CD4-positive, alpha-beta memory T cell (primary cell): ENCODE measurements at regions of chr15 and their contacts with region 1.

Region 1: DNA sequence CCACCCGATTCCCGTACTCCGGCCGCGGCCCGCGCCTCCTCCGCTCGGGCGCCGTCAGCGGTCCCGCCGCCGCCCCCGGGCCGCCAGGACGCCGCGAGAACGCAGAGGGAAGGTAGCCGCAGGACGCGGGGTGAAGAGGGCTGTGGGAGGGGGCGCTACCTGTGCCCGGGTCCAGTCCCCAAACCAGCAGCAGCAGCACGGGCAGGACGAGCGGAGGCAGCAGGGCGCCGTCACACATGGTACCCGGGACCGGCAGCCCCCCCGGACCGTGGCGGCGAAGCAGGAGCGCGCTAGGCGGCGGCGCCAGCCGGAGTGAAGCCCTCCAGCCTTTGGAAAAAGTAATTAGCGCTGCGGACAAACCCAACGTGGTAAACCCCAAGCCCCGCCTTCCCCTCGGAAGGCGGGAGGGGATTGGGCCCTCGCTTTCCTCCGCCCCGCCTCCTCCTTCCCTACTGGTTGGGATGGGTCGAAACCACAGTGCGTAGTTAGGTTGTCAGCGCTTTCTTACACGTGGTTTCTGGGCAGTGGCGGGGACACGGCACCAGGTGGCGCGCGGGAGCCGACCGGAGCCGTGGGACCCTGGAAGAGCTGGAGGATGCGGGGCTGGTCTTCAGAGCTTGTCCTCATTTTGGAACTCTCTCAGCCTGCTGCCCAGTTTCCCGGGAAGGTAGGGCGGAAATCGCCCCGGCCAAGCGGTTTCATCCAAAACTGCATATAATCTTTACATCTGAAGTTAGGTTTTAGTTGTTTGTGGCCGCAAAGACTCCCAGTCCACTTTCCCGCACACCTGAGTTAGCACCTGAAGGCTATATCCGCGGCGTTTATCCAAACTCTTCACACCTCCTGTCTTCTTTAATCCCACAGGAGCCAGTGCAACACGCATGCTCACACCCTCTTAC is at the start of gene ADAMTS17:
- DNase-seq: peak; percentile 94 to 97 (median 95)
- H3K4me3 ChIP-seq: peak within 1 kb of the TSS in 1 of 2 donors; percentile 79
- H3K4me3 Mint-ChIP-seq: peak within 1 kb of the TSS; percentile 57 to 86 (median 75)
- H3K27ac ChIP-seq: peak within 1 kb of the TSS; percentile 43
- H3K27ac Mint-ChIP-seq: peak within 1 kb of the TSS; percentile 29 to 87 (median 77)
- H3K4me1 ChIP-seq: peaks cover 22% of the 10 kb centered on the region
- H3K4me1 Mint-ChIP-seq: peaks cover 13 to 34% (median 15%) of the 10 kb centered on the region in 4 donors
- H3K27me3 ChIP-seq: no peaks in the 10 kb centered on the region
- H3K27me3 Mint-ChIP-seq: no peaks in the 10 kb centered on the region
- total RNA-seq, gene ADAMTS17: 4.7 to 6.2 TPM

Region 2: DNA sequence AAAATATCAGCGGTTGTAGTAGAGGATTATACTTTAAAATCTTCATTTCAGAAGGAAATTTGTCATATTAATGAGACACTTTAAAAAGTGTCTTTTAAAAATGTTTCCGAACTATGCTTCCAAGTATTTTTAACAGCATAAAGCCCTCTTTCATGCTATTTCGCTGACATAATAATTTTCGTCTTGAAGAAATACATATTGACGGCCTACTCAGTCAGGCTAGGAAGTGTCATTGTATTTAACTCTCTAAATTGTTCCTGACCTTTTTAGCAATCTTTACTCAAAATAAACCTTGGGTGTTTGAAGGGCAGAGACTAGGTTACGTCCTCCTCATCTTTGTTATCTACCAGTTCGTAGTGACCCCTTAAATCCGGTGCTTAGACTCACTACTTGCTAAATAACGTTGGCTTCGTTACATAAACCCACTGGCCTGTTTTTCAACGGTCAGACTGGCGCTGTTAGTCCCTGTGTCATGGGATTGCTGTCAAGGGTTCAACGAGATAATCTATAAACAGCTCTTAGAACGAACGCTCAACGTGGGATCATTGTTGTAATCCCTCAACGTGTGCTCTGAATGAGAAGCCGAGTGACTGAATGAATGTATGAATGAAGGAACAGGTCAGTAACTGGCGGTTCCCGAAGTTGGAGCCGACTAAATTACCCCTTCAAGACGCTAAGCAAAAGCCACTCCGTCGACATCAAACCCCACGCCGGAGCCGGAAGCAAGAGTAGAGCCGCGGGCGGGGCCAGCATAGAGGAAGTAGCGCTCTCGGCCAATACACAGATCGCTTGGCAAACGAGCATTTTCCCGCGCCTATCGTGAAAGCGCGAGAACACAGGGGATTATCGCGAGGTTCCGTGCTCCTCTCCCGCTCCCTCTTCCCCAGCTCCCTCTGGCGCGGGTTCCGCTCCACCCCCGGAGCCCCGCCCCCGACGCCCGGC is 1091.1 kb before region 1 on chr15:
- CTCF ChIA-PET with region 1: no interaction called
- POLR2A ChIA-PET with region 1: no interaction called
- intact Hi-C with region 1: loop called (anchors 1 kb)
- DNase-seq: peak; percentile 90 to 95 (median 93)
- H3K4me3 ChIP-seq: peak overlapping the region; percentile 47 to 73
- H3K4me3 Mint-ChIP-seq: peak overlapping the region; percentile 84 to 96 (median 92)
- H3K27ac ChIP-seq: peak overlapping the region; percentile 60
- H3K27ac Mint-ChIP-seq: peak overlapping the region; percentile 70 to 95 (median 90)
- H3K4me1 ChIP-seq: peaks cover 31% of the 10 kb centered on the region
- H3K4me1 Mint-ChIP-seq: peaks cover 17 to 33% (median 29%) of the 10 kb centered on the region in 4 donors
- H3K27me3 ChIP-seq: no peaks in the 10 kb centered on the region
- H3K27me3 Mint-ChIP-seq: no peaks in the 10 kb centered on the region

Region 3: GRCh38 chr15:99565299-99566156 is 776.4 kb before region 1 on chr15 and contains the start of gene MEF2A:
- CTCF ChIA-PET with region 1: no interaction called
- POLR2A ChIA-PET with region 1: no interaction called
- intact Hi-C with region 1: loop called (anchors 5 kb)
- DNase-seq: peak; percentile 92 to 94 (median 92)
- H3K4me3 ChIP-seq: peak within 1 kb of the TSS; percentile 63 to 99
- H3K4me3 Mint-ChIP-seq: peak within 1 kb of the TSS; percentile 95 to 100 (median 98)
- H3K27ac ChIP-seq: peak within 1 kb of the TSS; percentile 85
- H3K27ac Mint-ChIP-seq: peak within 1 kb of the TSS; percentile 95 to 99 (median 97)
- H3K4me1 ChIP-seq: peaks cover 29% of the 10 kb centered on the region
- H3K4me1 Mint-ChIP-seq: peaks cover 28 to 45% (median 36%) of the 10 kb centered on the region in 4 donors
- H3K27me3 ChIP-seq: no peaks in the 10 kb centered on the region
- H3K27me3 Mint-ChIP-seq: peaks cover 0 to 3% of the 10 kb centered on the region in 2 donors
- total RNA-seq, gene MEF2A: 27.6 to 27.8 TPM

Region 4: GRCh38 chr15:99961011-99961441 is 380.9 kb before region 1 on chr15:
- CTCF ChIA-PET with region 1: interaction called, 11 read pairs
- POLR2A ChIA-PET with region 1: no interaction called
- intact Hi-C with region 1: no loop called
- DNase-seq: no peak
- H3K4me3 ChIP-seq: no peak overlapping the region
- H3K4me3 Mint-ChIP-seq: no peak overlapping the region
- H3K27ac ChIP-seq: no peak overlapping the region
- H3K27ac Mint-ChIP-seq: no peak overlapping the region
- H3K4me1 ChIP-seq: peaks cover 5% of the 10 kb centered on the region
- H3K4me1 Mint-ChIP-seq: peaks cover 6 to 7% (median 6%) of the 10 kb centered on the region in 4 donors
- H3K27me3 ChIP-seq: no peaks in the 10 kb centered on the region
- H3K27me3 Mint-ChIP-seq: peaks cover 4 to 18% of the 10 kb centered on the region in 2 donors

Region 5: DNA sequence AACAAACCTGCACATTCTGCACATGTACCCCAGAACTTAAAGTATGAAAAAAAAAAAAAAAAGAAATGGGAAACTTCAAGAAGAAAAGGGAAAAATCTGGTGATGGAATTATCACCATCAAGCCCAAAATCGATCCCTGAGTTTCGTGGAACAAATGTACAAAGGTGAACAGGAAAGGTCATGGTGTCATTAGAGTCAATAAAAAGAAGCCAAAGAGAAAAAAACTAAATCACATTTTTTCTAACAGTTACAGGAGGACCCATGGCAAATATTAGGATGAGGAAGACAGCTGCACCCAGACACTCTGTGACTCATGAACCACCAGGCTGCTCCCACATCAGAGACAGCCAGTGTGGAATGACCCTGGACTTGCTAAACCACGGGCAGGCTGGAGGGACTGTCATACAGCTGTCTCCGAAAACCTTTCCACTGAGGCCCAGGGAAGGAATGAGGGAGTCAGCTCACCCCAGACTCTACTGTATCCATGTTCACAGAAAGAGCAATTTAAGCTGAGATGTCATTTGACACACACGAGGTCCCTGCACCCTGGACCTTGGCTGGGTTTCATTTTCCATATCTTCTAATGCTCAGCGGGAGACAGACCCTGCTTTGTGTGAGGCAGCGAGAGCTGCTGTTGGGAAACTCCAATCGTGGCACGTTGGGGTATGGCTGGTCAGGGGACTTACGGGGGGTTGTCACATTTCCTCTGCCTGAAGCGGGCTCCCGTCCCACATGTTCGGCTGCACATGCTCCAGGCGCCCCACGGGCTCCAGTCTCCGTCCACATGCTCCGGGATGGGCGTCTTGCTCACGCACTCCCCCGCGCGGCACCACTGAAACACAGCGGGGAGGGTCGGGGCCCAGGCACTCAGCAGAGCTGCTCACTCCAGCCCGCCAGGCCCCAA is 210.3 kb before region 1 on chr15:
- CTCF ChIA-PET with region 1: interaction called, 4 read pairs
- POLR2A ChIA-PET with region 1: no interaction called
- intact Hi-C with region 1: loop called (anchors 1 kb)
- DNase-seq: no peak
- H3K4me3 ChIP-seq: peak overlapping the region in 1 of 2 donors; percentile 9
- H3K4me3 Mint-ChIP-seq: peak overlapping the region; percentile 13 to 69 (median 43)
- H3K27ac ChIP-seq: no peak overlapping the region
- H3K27ac Mint-ChIP-seq: peak overlapping the region in 1 of 7 donors; percentile 36
- H3K4me1 ChIP-seq: no peaks in the 10 kb centered on the region
- H3K4me1 Mint-ChIP-seq: peaks cover 0 to 1% (median 0%) of the 10 kb centered on the region in 4 donors
- H3K27me3 ChIP-seq: no peaks in the 10 kb centered on the region
- H3K27me3 Mint-ChIP-seq: no peaks in the 10 kb centered on the region

Region 6: GRCh38 chr15:100269831-100270230 is 72.1 kb before region 1 on chr15:
- CTCF ChIA-PET with region 1: no interaction called
- POLR2A ChIA-PET with region 1: no interaction called
- intact Hi-C with region 1: no loop called
- DNase-seq: peak in 1 of 5 donors; percentile 6
- H3K4me3 ChIP-seq: no peak overlapping the region
- H3K4me3 Mint-ChIP-seq: no peak overlapping the region
- H3K27ac ChIP-seq: no peak overlapping the region
- H3K27ac Mint-ChIP-seq: no peak overlapping the region
- H3K4me1 ChIP-seq: no peaks in the 10 kb centered on the region
- H3K4me1 Mint-ChIP-seq: no peaks in the 10 kb centered on the region
- H3K27me3 ChIP-seq: no peaks in the 10 kb centered on the region
- H3K27me3 Mint-ChIP-seq: no peaks in the 10 kb centered on the region

Region 7: GRCh38 chr15:100457201-100457600 is 115.3 kb after region 1 on chr15:
- CTCF ChIA-PET with region 1: no interaction called
- POLR2A ChIA-PET with region 1: no interaction called
- intact Hi-C with region 1: no loop called
- DNase-seq: no peak
- H3K4me3 ChIP-seq: no peak overlapping the region
- H3K4me3 Mint-ChIP-seq: no peak overlapping the region
- H3K27ac ChIP-seq: no peak overlapping the region
- H3K27ac Mint-ChIP-seq: no peak overlapping the region
- H3K4me1 ChIP-seq: no peaks in the 10 kb centered on the region
- H3K4me1 Mint-ChIP-seq: peaks cover 0 to 7% (median 3%) of the 10 kb centered on the region in 4 donors
- H3K27me3 ChIP-seq: no peaks in the 10 kb centered on the region
- H3K27me3 Mint-ChIP-seq: no peaks in the 10 kb centered on the region

Region 8: GRCh38 chr15:100572362-100572983 is 230.6 kb after region 1 on chr15:
- CTCF ChIA-PET with region 1: interaction called, 214 read pairs
- POLR2A ChIA-PET with region 1: interaction called, 9 read pairs
- intact Hi-C with region 1: loop called (anchors 2 kb)
- DNase-seq: peak in 4 of 5 donors; percentile 35 to 41 (median 36)
- H3K4me3 ChIP-seq: no peak overlapping the region
- H3K4me3 Mint-ChIP-seq: peak overlapping the region in 7 of 8 donors; percentile 77 to 88 (median 84)
- H3K27ac ChIP-seq: peak overlapping the region; percentile 37
- H3K27ac Mint-ChIP-seq: peak overlapping the region in 5 of 7 donors; percentile 81 to 95 (median 94)
- H3K4me1 ChIP-seq: peaks cover 31% of the 10 kb centered on the region
- H3K4me1 Mint-ChIP-seq: peaks cover 32 to 58% (median 42%) of the 10 kb centered on the region in 4 donors
- H3K27me3 ChIP-seq: no peaks in the 10 kb centered on the region
- H3K27me3 Mint-ChIP-seq: no peaks in the 10 kb centered on the region